AG04450 (cell line): ENCODE measurements at regions of chr16 and their contacts with region 1.

Region 1: DNA sequence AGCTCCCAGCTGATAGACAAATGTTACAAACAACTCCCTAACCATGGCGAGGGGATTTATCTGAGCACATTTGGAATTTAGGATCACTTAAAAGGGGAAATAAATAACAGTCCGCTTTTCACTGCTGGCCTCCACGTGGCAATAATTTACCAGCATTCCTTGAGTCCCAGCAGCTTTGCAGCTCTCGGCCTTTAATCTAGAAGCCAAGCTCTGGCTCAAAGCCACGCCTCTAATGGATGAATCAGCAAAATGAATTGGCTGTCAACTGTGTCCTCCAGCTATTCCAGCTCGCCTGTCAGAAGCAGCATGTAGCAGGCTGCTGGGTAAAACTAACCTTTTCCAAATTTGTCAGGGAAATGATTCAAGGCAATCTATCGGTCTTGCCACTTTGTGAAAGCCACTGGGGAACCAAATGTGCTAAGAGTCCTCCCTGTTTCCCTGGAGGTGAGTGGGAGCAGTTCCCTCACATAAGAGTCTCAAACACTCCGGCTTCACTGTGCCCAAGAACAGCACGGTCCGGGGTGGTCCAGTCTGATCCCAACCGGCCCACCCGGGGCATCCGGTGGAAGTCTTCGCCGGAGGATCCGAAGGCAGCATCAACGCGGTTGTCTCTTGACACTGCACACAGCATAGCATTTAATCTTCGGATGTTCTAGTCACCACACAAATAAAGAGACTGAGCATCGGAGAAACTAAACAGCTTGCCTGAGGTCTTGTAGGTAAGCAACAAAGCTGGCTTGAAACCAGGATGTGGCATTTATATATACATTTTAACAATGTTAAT is 143.3 kb downstream of the PARN start:
- DNase-seq: peak; percentile 86
- H3K4me3 ChIP-seq: peak overlapping the region; percentile 57
- H3K27ac ChIP-seq: peak overlapping the region; percentile 76
- H3K27me3 ChIP-seq: no peaks in the 10 kb centered on the region
- CTCF ChIP-seq: no peak

Region 2: GRCh38 chr16:14448879-14449278 is 37.8 kb before region 1 on chr16:
- CTCF ChIA-PET with region 1: no interaction called
- POLR2A ChIA-PET with region 1: no interaction called
- DNase-seq: no peak
- H3K4me3 ChIP-seq: no peak overlapping the region
- H3K27ac ChIP-seq: no peak overlapping the region
- H3K27me3 ChIP-seq: no peaks in the 10 kb centered on the region
- CTCF ChIP-seq: no peak

Region 3: DNA sequence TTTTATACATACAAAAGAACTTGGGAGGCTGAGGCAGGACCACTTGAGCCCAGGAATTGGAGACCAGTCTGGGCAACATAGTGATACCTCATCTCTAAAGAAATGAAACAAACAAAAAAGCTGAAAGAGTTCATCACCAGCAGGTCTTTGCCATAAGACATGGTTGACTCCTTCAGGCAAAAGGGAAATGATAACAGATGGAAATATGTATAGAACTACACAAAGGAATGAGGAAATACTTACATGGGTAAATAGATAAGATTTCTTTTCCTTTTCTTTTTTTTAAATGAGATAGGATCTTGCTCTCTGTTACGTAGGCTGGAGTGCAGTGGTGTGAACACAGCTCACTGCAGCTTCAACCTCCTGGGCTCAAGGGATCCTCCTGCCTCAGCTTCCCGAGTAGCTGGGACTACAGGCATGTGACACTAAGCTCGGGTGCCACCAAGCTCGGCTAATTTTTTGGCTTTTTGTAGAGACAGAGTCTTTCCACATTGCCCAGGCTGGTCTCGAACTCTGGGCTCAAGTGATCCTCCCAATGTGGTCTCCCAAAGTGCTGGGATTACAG is 21.8 kb before region 1 on chr16:
- CTCF ChIA-PET with region 1: interaction called, 10 read pairs
- POLR2A ChIA-PET with region 1: interaction called, 5 read pairs
- DNase-seq: no peak
- H3K4me3 ChIP-seq: no peak overlapping the region
- H3K27ac ChIP-seq: no peak overlapping the region
- H3K27me3 ChIP-seq: no peaks in the 10 kb centered on the region
- CTCF ChIP-seq: no peak

Region 4: GRCh38 chr16:14501331-14502255 is 14.9 kb after region 1 on chr16:
- CTCF ChIA-PET with region 1: interaction called, 5 read pairs
- POLR2A ChIA-PET with region 1: interaction called, 14 read pairs
- DNase-seq: peak; percentile 87
- H3K4me3 ChIP-seq: peak overlapping the region; percentile 14; the same call in 1 of the 2 replicates
- H3K27ac ChIP-seq: peak overlapping the region; percentile 93
- H3K27me3 ChIP-seq: no peaks in the 10 kb centered on the region
- CTCF ChIP-seq: no peak